Breast epithelium (tissue), 4 donors: ENCODE measurements at regions of chr6 and their contacts with region 1.

Region 1: GRCh38 chr6:40399888-40400457 is 187.2 kb downstream of the LRFN2 start:
- DNase-seq: no peak
- H3K4me3 ChIP-seq: no peak overlapping the region
- H3K27ac ChIP-seq: no peak overlapping the region
- H3K4me1 ChIP-seq: peaks cover 0 to 4% of the 10 kb centered on the region in 2 donors
- H3K27me3 ChIP-seq: no peaks in the 10 kb centered on the region
- CTCF ChIP-seq: no peak
- POLR2A ChIP-seq: no peak

Region 2: DNA sequence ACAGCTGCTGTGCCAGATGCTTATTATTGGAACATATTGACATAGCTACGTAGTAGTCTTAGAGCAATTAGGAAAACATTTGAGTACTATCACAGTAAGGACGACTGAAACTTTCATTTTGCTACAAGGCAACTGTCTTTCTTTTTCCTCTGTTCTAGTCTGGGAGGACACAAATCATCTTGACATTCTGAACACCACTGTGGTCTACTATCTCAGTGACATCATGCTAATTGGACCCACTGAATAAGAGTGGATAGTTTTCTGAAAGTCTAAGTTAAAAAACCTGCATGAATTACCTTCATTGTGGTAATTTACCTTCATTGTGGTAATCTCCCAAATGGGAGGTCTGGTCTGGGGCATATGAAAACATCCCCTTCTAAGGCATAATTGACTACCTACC is 302.4 kb before region 1 on chr6:
- intact Hi-C with region 1: loop called (anchors 5 kb)
- DNase-seq: no peak
- H3K4me3 ChIP-seq: no peak overlapping the region
- H3K27ac ChIP-seq: no peak overlapping the region
- H3K4me1 ChIP-seq: no peaks in the 10 kb centered on the region
- H3K27me3 ChIP-seq: no peaks in the 10 kb centered on the region
- CTCF ChIP-seq: no peak
- POLR2A ChIP-seq: no peak